Activated CD4-positive, alpha-beta T cell treated with anti-CD3 and anti-CD28 coated beads for 36 hours (primary cell): ENCODE measurements at regions of chr4 and their contacts with region 1.

Region 1: GRCh38 chr4:99763635-99764101 is 53.0 kb upstream of the DAPP1 start:
- DNase-seq: peak; percentile 53
- ATAC-seq: peak; percentile 96
- H3K4me3 Mint-ChIP-seq: no peak overlapping the region
- H3K27ac Mint-ChIP-seq: no peak overlapping the region
- H3K4me1 Mint-ChIP-seq: peaks cover 34% of the 10 kb centered on the region
- H3K27me3 Mint-ChIP-seq: peaks cover 10% of the 10 kb centered on the region

Region 2: GRCh38 chr4:99248714-99249113 is 515.0 kb before region 1 on chr4:
- CTCF ChIA-PET with region 1: no interaction called
- POLR2A ChIA-PET with region 1: no interaction called
- intact Hi-C with region 1: no loop called
- DNase-seq: no peak
- ATAC-seq: no peak
- H3K4me3 Mint-ChIP-seq: no peak overlapping the region
- H3K27ac Mint-ChIP-seq: no peak overlapping the region
- H3K4me1 Mint-ChIP-seq: no peaks in the 10 kb centered on the region
- H3K27me3 Mint-ChIP-seq: peaks cover 8% of the 10 kb centered on the region

Region 3: DNA sequence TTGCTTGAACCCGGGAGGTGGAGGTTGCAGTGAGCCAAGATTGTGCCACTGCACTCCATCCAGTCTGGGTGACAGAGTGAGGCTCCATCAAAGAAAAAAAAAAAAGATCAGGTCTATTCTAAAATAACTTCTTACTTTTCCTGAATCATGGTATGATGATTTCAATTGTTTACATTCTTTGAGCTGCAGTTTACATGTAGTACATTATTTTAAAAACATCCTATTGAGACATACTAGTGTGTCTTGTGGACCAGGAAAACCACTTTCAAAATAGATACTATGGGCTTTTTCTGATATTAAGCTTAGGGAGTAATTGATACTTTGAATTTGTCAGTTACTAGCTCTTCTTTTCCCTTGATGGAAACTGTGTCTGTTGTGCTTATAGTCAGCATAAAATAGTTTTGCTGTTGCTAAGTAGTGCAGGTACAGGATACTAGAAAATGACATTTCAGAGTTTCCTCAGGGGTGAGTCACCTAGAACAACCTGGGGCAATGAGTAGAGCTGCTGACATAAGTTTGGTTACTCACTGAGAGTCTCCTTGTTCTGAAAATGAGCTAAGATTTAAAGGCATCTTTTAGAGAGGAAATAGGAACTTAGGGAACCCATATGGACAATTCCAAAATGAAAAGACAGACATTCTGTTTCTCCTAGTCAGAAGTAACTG is 52.9 kb before region 1 on chr4:
- CTCF ChIA-PET with region 1: interaction called, 3 read pairs
- POLR2A ChIA-PET with region 1: no interaction called
- intact Hi-C with region 1: loop called in 1 of 2 experiments (anchors 1 kb)
- DNase-seq: peak; percentile 5
- ATAC-seq: peak; percentile 100
- H3K4me3 Mint-ChIP-seq: no peak overlapping the region
- H3K27ac Mint-ChIP-seq: no peak overlapping the region
- H3K4me1 Mint-ChIP-seq: peaks cover 13% of the 10 kb centered on the region
- H3K27me3 Mint-ChIP-seq: peaks cover 11% of the 10 kb centered on the region